Colonic mucosa (tissue), 4 donors: ENCODE measurements at regions of chr4 and their contacts with region 1.

Region 1: DNA sequence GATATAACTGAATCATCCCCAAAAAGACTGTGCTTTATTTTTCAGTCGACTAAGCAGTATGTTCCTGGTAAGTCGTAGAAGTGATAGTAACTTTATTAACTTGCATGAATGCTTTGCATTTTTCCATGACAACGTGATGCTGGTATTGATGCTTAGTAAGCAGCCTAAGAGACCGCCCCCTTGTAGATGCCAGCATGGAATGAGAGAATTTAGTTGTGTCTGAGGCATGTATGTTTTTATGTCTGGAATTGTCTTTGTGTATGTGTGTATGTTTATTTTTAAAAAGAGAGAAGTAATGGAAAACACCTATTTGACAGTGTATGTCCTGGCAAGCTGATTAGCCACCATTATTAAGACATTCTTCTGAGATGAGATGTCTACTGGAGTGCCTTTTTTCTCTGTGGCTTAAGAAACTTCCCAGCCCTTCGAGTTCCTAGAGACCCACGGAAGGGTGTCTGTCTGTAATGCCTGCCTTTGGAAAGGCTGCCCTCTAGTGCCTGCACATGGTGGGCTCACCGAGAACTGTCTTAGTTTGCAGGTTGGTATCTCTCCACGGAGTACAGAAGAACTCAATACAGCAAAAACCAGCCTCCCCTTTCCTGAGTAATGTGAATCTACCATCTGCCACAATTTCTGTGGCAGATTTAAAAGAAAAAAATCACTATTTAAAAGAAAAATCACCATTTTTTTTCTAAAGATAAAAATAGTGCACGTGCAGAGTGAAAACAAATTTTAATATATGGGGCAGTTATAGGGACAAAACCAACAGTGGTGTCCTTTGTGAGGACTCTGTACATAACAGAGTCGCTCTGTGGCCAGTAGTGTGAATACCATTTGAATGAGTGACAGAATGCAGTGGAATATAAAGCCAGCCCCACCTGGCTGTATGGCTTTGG is 85.9 kb downstream of the AASDH start:
- DNase-seq: peak; percentile 87
- H3K4me3 ChIP-seq: no peak overlapping the region
- H3K27ac ChIP-seq: no peak overlapping the region
- H3K4me1 ChIP-seq: no peaks in the 10 kb centered on the region
- H3K27me3 ChIP-seq: no peaks in the 10 kb centered on the region
- CTCF ChIP-seq: peak; percentile 74

Region 2: GRCh38 chr4:55948726-55949474 is 352.5 kb before region 1 on chr4 and contains the start of gene CEP135:
- intact Hi-C with region 1: loop called (anchors 5 kb)
- DNase-seq: peak; percentile 94
- H3K4me3 ChIP-seq: peak within 1 kb of the TSS; percentile 74
- H3K27ac ChIP-seq: peak within 1 kb of the TSS; percentile 97
- H3K4me1 ChIP-seq: no peaks in the 10 kb centered on the region
- H3K27me3 ChIP-seq: no peaks in the 10 kb centered on the region
- CTCF ChIP-seq: peak; percentile 96
- total RNA-seq, gene CEP135: 4.0 to 7.3 TPM

Region 3: GRCh38 chr4:56048702-56049431 is 252.6 kb before region 1 on chr4:
- intact Hi-C with region 1: loop called (anchors 10 kb)
- DNase-seq: peak; percentile 73
- H3K4me3 ChIP-seq: peak overlapping the region; percentile 80
- H3K27ac ChIP-seq: peak overlapping the region; percentile 53
- H3K4me1 ChIP-seq: no peaks in the 10 kb centered on the region
- H3K27me3 ChIP-seq: no peaks in the 10 kb centered on the region
- CTCF ChIP-seq: no peak

Region 4: DNA sequence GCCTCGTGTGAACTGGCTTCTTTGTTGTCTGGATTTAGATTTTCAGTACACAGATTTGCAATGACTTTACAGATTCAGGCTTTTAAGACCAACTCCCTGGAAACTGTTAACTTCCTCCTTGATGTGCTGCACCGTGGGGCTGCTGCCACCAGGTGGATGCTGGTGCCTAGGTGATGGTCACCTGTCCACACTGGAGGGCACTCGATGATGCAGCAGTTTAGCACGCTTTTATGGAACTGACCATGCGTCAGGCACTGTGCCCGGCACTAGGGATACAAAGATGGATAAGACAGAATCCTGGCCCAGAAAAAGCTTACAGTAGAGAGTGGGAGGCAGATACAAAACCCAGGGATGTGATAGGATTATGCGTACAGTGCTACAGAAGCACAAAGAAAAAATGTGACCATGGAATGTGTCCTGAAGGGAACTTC is 172.0 kb before region 1 on chr4:
- intact Hi-C with region 1: loop called (anchors 1 kb)
- DNase-seq: peak; percentile 76
- H3K4me3 ChIP-seq: no peak overlapping the region
- H3K27ac ChIP-seq: no peak overlapping the region
- H3K4me1 ChIP-seq: no peaks in the 10 kb centered on the region
- H3K27me3 ChIP-seq: no peaks in the 10 kb centered on the region
- CTCF ChIP-seq: peak; percentile 53

Region 5: DNA sequence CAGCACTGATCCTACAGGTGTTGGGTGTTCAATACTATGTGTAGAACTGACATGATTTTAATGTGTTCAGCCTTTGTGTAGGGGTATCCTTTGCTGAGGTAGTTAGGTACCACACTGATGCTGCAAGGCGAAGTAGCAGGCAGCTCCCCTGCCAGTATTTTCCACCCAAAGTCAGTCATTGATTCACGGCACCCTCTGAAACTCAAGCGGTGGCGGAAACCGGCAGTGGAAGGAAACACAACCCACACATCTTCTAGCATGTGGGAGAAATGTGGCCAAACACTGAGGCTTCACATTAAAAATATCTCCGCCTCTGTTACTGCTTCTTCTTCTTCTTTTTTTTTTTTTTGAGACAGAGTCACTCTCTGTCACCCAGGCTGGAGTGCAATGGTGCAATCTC is 40.4 kb before region 1 on chr4:
- intact Hi-C with region 1: no loop called
- DNase-seq: no peak
- H3K4me3 ChIP-seq: no peak overlapping the region
- H3K27ac ChIP-seq: no peak overlapping the region
- H3K4me1 ChIP-seq: no peaks in the 10 kb centered on the region
- H3K27me3 ChIP-seq: no peaks in the 10 kb centered on the region
- CTCF ChIP-seq: no peak